Activated naive CD4-positive, alpha-beta T cell treated with anti-CD3 and anti-CD28 coated beads for 36 hours (primary cell): ENCODE measurements at regions of chr7 and their contacts with region 1.

Region 1: GRCh38 chr7:44638611-44639557 is 32.5 kb downstream of the OGDH start:
- DNase-seq: peak; percentile 92
- H3K4me3 Mint-ChIP-seq: peak overlapping the region; percentile 54
- H3K27ac Mint-ChIP-seq: peak overlapping the region; percentile 97
- H3K4me1 Mint-ChIP-seq: peaks cover 64% of the 10 kb centered on the region
- H3K27me3 Mint-ChIP-seq: no peaks in the 10 kb centered on the region

Region 2: GRCh38 chr7:43960933-43961332 is 678.0 kb before region 1 on chr7:
- CTCF ChIA-PET with region 1: no interaction called
- intact Hi-C with region 1: no loop called
- DNase-seq: no peak
- H3K4me3 Mint-ChIP-seq: no peak overlapping the region
- H3K27ac Mint-ChIP-seq: no peak overlapping the region
- H3K4me1 Mint-ChIP-seq: peaks cover 5% of the 10 kb centered on the region
- H3K27me3 Mint-ChIP-seq: no peaks in the 10 kb centered on the region

Region 3: DNA sequence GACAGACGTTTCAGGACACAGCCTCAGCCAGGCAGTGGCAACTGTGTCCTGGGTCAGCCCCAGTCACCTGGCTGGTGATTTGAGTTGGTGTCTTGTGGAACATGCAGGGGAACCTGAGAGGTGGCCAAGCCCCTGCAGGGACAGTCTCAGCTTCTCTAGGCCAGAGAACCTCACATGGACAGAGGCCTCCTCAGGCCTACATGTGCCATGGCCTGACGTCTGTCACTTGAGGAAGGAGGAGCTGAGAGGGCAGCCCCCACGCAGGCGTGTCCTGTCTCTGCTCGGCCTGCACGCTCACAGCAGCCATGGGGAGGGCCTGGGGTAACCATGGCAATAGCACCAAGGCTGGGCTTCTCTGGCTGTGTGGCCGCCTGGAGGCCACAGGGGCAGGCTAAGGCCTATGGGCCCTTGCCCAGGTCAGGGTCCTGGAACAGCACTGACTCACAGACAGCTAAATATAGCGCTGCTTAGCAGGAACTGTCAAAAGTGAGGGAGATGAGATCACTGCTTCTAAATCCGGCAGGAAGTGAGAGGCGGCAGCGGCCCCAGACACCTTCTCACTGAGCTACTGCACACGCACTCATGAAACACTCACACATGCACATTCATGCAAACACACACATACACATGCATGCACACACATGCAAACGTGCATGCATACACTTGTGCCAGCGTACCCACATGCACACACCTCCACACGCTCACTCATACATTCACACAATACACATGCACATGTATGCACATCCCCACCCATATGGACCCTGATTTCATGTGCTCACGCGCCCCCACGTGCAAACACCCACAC is 381.1 kb before region 1 on chr7:
- CTCF ChIA-PET with region 1: no interaction called
- intact Hi-C with region 1: loop called (anchors 1 kb)
- DNase-seq: peak; percentile 90
- H3K4me3 Mint-ChIP-seq: peak overlapping the region; percentile 17
- H3K27ac Mint-ChIP-seq: peak overlapping the region; percentile 94
- H3K4me1 Mint-ChIP-seq: peaks cover 29% of the 10 kb centered on the region
- H3K27me3 Mint-ChIP-seq: no peaks in the 10 kb centered on the region

Region 4: GRCh38 chr7:44565097-44565794 is 73.6 kb before region 1 on chr7:
- CTCF ChIA-PET with region 1: no interaction called
- intact Hi-C with region 1: no loop called
- DNase-seq: peak; percentile 71
- H3K4me3 Mint-ChIP-seq: no peak overlapping the region
- H3K27ac Mint-ChIP-seq: peak overlapping the region; percentile 9
- H3K4me1 Mint-ChIP-seq: peaks cover 11% of the 10 kb centered on the region
- H3K27me3 Mint-ChIP-seq: no peaks in the 10 kb centered on the region

Region 5: DNA sequence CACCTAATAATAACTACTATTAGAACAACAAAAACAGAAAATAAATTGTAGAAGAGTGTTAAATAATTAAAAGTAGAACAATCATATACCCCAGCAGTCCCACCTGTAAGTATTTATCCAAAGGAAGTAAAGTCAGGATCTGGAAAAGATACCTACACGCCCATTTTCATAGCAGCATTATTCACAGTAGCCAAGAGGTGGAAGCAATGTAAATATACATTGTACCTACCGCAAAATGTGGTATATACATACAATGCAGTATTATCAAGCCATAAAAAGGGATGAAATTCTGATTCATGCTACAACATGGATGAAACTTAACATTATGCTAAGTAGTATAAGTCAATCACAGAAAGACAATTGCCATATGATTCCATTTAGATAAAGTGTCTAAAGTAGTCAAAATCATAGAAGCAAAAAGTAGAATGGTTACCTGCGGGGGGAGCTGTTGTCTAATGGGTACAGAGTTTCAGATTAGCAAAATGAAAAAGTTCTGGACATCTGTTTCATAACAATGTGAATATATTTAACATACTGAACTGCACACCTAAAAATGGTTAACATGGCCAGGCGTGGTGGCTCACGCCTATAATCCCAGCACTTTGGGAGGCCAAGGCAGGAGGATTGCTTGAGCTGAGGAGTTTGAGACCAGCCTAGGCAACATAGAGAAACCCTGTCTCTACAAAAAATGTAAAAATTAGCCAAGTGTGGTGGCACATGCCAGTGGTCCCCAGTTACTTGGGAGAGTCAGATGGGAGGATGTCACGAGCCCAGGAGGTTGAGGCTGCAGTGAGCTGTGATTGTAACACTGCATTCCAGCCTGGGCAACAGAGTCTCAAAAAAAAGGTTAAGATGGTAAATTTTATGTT is 50.8 kb before region 1 on chr7:
- CTCF ChIA-PET with region 1: no interaction called
- intact Hi-C with region 1: loop called (anchors 1 kb)
- DNase-seq: peak; percentile 83
- H3K4me3 Mint-ChIP-seq: no peak overlapping the region
- H3K27ac Mint-ChIP-seq: no peak overlapping the region
- H3K4me1 Mint-ChIP-seq: peaks cover 4% of the 10 kb centered on the region
- H3K27me3 Mint-ChIP-seq: peaks cover 1% of the 10 kb centered on the region

Region 6: DNA sequence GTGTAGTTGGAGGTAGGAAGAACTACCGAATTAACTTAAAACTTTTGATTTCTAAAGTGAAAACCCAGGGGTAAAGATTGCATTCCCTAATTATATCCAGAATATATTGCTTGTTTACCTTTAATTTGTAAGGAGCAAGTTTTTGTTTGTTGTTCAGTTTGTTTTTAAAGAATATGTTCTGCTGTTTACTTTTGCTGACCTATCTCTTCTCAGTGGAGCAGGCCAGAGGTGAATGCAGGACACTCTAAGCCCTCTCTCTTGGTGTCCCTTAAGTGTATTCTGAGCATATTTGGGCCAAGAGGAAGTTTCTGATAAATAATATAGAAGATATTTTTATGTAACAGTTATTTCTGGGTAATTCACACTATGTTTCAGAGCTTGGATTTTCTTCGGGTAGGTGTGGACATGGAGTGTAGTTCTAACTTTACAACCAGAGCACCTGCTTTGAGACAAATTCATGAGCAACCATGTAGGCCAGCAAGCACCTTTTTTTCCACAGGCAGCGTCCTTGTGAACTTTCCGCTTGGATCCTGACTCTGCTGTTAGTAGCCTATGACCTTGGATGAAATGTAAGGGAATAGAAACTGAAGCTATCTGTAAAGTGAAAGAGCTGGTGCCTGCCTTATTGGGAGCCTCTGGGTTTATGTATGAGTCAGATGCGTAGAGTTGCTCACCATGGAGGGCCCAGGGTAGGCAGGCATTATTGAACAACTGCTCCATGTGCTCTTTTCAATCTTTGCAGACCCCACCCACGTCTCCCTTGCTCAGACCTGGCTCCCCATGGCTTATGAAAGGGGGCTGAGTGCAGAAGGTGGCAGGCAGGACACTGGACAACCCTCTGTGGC is 16.4 kb before region 1 on chr7:
- CTCF ChIA-PET with region 1: interaction called, 52 read pairs
- intact Hi-C with region 1: loop called (anchors 1 kb)
- DNase-seq: peak; percentile 69
- H3K4me3 Mint-ChIP-seq: peak overlapping the region; percentile 39
- H3K27ac Mint-ChIP-seq: peak overlapping the region; percentile 76
- H3K4me1 Mint-ChIP-seq: peaks cover 72% of the 10 kb centered on the region
- H3K27me3 Mint-ChIP-seq: no peaks in the 10 kb centered on the region

Region 7: GRCh38 chr7:44748045-44748947 is 109.4 kb after region 1 on chr7 and contains the start of gene ZMIZ2:
- CTCF ChIA-PET with region 1: no interaction called
- intact Hi-C with region 1: loop called (anchors 1 kb)
- DNase-seq: peak; percentile 92
- H3K4me3 Mint-ChIP-seq: peak within 1 kb of the TSS; percentile 82
- H3K27ac Mint-ChIP-seq: peak within 1 kb of the TSS; percentile 88
- H3K4me1 Mint-ChIP-seq: peaks cover 39% of the 10 kb centered on the region
- H3K27me3 Mint-ChIP-seq: no peaks in the 10 kb centered on the region
- total RNA-seq, gene ZMIZ2: 83.1 to 86.5 TPM

Region 8: DNA sequence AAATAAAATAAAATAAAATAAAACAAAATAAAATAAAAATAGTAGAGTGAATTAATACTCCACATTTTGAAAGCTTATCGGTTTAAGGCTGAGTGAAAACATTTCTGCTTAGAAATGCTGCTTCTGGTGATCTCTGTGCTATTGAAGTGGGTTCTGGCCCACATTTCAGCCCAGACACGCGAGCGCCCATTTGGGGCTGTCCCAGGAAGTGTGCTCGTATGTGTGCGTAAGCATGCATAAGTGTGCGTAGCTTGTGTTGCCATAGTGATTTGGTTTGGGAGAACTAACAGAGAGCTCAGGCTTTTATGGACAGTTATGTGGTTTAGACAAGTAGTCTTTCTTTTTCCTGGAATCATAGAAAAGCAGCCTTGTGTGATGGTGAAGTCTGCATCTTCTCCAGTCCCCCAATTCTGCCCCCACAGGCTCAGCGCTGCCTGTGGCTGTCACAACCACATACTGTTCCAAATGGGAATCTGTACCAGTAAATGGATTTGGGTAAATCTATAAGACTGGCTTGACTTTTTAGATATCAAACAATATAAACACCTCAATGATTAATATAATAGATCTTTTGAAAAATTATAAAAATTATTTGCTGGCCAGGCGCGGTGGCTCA is 276.2 kb after region 1 on chr7:
- CTCF ChIA-PET with region 1: no interaction called
- intact Hi-C with region 1: loop called (anchors 1 kb)
- DNase-seq: peak; percentile 88
- H3K4me3 Mint-ChIP-seq: no peak overlapping the region
- H3K27ac Mint-ChIP-seq: peak overlapping the region; percentile 83
- H3K4me1 Mint-ChIP-seq: peaks cover 17% of the 10 kb centered on the region
- H3K27me3 Mint-ChIP-seq: no peaks in the 10 kb centered on the region